Right cardiac atrium (tissue), 5 donors: ENCODE measurements at regions of chr11 and their contacts with region 1.

Region 1: DNA sequence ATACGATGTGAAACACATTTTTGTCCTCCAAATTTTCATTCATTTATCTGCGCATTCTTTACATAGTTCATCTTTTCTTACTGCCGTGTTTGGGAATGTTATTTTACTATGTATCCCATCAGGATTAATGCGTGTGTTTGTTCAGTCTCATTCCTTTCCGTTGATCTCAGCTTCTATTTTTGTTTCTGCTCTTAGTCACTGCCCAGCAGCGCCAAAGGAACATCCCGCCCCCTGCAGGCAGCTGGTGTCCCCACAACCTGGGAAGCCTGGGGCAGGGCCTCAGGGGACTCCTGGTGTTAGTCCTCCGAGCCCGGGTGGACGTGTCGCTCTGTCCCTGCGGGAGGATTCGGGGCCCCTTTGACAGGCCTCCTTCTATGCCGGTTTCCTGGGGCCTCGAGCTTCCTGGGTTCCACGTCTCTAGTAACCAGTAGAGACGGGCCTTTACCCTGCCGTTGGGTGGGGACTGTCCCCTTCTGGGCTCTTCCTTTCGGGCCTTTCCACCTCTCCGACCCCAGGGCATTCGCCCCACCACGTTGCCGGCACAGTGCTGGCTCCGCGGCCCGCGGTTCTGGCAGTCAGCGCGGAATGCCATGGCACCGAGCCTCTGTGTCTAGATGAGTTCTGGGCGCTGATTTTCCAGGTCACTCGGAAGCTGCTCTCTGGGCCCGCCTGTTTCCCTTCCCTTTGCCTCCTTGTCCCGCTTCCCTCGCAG is 39.8 kb downstream of the WEE1 start:
- DNase-seq: peak; percentile 93 to 97 (median 96)
- ATAC-seq: peak; percentile 93 to 94
- H3K4me3 ChIP-seq: peak overlapping the region; percentile 55
- H3K27ac ChIP-seq: peak overlapping the region; percentile 95
- H3K4me1 ChIP-seq: no peaks in the 10 kb centered on the region
- H3K27me3 ChIP-seq: no peaks in the 10 kb centered on the region

Region 2: GRCh38 chr11:9180784-9181183 is 432.5 kb before region 1 on chr11:
- intact Hi-C with region 1: no loop called
- DNase-seq: no peak
- ATAC-seq: no peak
- H3K4me3 ChIP-seq: no peak overlapping the region
- H3K27ac ChIP-seq: no peak overlapping the region
- H3K4me1 ChIP-seq: peaks cover 3% of the 10 kb centered on the region
- H3K27me3 ChIP-seq: no peaks in the 10 kb centered on the region

Region 3: GRCh38 chr11:9534791-9535781 is 78.2 kb before region 1 on chr11:
- intact Hi-C with region 1: loop called in 1 of 4 experiments (anchors 10 kb)
- DNase-seq: peak; percentile 84 to 90 (median 90)
- ATAC-seq: peak; percentile 55 to 76
- H3K4me3 ChIP-seq: no peak overlapping the region
- H3K27ac ChIP-seq: no peak overlapping the region
- H3K4me1 ChIP-seq: peaks cover 3% of the 10 kb centered on the region
- H3K27me3 ChIP-seq: no peaks in the 10 kb centered on the region

Region 4: GRCh38 chr11:9716275-9717039 is 103.2 kb after region 1 on chr11:
- intact Hi-C with region 1: no loop called
- DNase-seq: peak in 1 of 3 donors; percentile 28
- ATAC-seq: peak; percentile 81 to 93
- H3K4me3 ChIP-seq: no peak overlapping the region
- H3K27ac ChIP-seq: peak overlapping the region; percentile 39
- H3K4me1 ChIP-seq: peaks cover 12% of the 10 kb centered on the region
- H3K27me3 ChIP-seq: no peaks in the 10 kb centered on the region

Region 5: DNA sequence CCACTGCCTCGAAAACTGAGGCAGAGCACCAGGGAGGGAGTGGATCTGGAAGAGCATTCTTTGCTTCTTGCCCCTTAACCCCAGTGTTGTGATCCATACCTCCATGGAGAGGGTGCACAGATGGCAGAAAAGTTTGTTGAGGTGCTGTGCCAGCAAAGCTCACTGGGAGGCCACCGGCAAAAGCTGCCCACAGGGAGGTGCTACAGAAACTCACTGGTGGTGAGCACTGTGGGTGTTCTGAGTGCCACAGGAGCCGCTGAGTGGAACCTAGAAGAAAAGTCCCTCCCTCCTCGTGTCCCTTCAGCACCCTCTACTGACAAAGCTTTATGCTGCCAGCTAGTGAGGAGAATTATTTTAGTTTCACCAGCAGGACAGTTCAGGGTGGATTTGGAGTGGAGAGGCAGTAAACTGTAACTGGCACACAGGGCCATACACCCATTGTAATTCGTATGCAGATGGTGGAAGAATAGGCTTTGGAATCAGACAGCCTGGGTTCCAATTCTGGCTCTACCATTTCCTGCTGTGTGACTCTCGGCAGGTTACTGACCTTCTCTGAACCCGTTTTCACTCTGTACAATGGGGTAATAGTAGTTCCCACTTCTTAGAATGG is 135.2 kb after region 1 on chr11:
- intact Hi-C with region 1: loop called in 2 of 4 experiments (anchors 5 kb)
- DNase-seq: peak; percentile 52 to 72 (median 70)
- ATAC-seq: peak; percentile 87 to 91
- H3K4me3 ChIP-seq: no peak overlapping the region
- H3K27ac ChIP-seq: no peak overlapping the region
- H3K4me1 ChIP-seq: peaks cover 2% of the 10 kb centered on the region
- H3K27me3 ChIP-seq: no peaks in the 10 kb centered on the region